MCF 10A (cell line): ENCODE measurements at regions of chr12 and their contacts with region 1.

Region 1: DNA sequence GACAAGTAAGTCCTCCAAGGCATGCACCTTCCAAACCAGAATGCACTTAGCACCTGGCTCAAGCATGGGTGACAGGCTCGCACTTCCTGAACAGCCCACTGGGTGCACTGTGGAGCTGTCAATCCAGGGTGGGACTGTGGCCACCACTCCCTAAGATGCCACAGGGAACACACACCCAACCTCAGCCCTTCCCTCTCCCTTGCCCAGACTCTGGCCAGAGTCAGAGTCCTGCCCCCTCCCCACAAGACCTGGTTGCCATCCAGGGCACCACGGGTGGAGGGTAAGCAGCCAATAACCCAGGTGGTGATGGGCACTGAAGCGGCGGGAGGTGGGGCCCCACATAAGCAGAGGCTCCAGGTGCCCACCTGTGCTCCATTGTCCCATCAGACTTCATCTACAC is 160.6 kb downstream of the MYRFL start:
- DNase-seq: peak; percentile 24
- H3K4me3 Mint-ChIP-seq: no peak overlapping the region
- H3K27ac Mint-ChIP-seq: no peak overlapping the region
- H3K4me1 Mint-ChIP-seq: no peaks in the 10 kb centered on the region
- H3K27me3 Mint-ChIP-seq: no peaks in the 10 kb centered on the region
- CTCF ChIP-seq: peak; percentile 18

Region 2: GRCh38 chr12:69966409-69967207 is 19.0 kb before region 1 on chr12:
- CTCF ChIA-PET with region 1: no interaction called
- POLR2A ChIA-PET with region 1: interaction called, 30 read pairs
- intact Hi-C with region 1: no loop called
- DNase-seq: peak; percentile 88
- H3K4me3 Mint-ChIP-seq: peak overlapping the region; percentile 6
- H3K27ac Mint-ChIP-seq: peak overlapping the region; percentile 86
- H3K4me1 Mint-ChIP-seq: peaks cover 23% of the 10 kb centered on the region
- H3K27me3 Mint-ChIP-seq: no peaks in the 10 kb centered on the region
- CTCF ChIP-seq: no peak

Region 3: GRCh38 chr12:70049600-70050360 is 64.1 kb after region 1 on chr12:
- CTCF ChIA-PET with region 1: no interaction called
- POLR2A ChIA-PET with region 1: no interaction called
- intact Hi-C with region 1: loop called (anchors 10 kb)
- DNase-seq: no peak
- H3K4me3 Mint-ChIP-seq: no peak overlapping the region
- H3K27ac Mint-ChIP-seq: no peak overlapping the region
- H3K4me1 Mint-ChIP-seq: peaks cover 16% of the 10 kb centered on the region
- H3K27me3 Mint-ChIP-seq: no peaks in the 10 kb centered on the region
- CTCF ChIP-seq: no peak

Region 4: GRCh38 chr12:70242695-70243509 is 257.2 kb after region 1 on chr12 and contains the start of gene CNOT2:
- CTCF ChIA-PET with region 1: interaction called, 3 read pairs
- POLR2A ChIA-PET with region 1: interaction called, 20 read pairs
- intact Hi-C with region 1: loop called (anchors 2 kb)
- DNase-seq: peak; percentile 92
- H3K4me3 Mint-ChIP-seq: peak within 1 kb of the TSS; percentile 95
- H3K27ac Mint-ChIP-seq: peak within 1 kb of the TSS; percentile 93
- H3K4me1 Mint-ChIP-seq: peaks cover 39% of the 10 kb centered on the region
- H3K27me3 Mint-ChIP-seq: no peaks in the 10 kb centered on the region
- CTCF ChIP-seq: no peak
- total RNA-seq, gene CNOT2: 88.3 and 91.0 TPM in 2 replicates